ENCODE measurements at regions of chr6 and their contacts with region 1.

Region 1: DNA sequence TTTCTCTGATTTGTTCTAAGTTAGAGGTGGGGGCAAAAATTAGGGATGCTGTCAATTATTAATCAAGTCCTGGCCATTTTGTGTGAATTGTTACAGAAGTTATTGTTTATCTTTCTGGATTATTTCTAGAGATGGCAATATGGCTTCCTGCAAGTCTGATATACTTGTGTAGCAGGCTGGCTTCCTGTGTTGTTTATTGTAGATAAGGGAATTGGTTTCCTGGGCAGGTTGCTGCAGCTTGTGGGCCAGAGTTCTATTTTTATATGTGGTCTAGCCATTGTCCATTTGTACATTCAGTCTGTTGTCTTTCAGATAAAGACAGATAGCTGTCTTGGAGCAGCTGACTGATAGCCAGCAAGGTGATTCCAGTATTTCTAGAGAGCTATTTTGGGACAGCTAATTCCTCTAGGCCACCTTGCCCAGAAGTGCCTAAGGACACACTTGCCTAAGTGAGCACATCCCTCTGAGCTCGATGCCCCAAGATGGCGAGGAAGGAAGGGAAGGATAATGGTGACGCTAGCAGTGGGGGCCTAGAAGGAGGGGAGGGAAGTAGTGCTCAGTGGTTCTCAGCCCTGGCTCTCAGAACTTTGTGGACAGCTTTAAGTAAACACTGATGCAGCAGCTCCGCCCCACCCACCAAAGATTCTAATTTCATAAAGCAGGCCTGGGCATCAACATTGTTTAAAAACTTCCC is 25.5 kb downstream of the DDO start:
- DNase-seq: no peak
- H3K4me3 ChIP-seq: no peak overlapping the region
- H3K27ac ChIP-seq: peak overlapping the region; percentile 22
- H3K4me1 ChIP-seq: peaks cover 57% of the 10 kb centered on the region
- H3K27me3 ChIP-seq: no peaks in the 10 kb centered on the region
- CTCF ChIP-seq: no peak

Region 2: GRCh38 chr6:109382576-109383437 is 1007.0 kb before region 1 on chr6:
- CTCF ChIA-PET with region 1: interaction called, 10 read pairs
- POLR2A ChIA-PET with region 1: no interaction called
- intact Hi-C with region 1: no loop called
- DNase-seq: peak; percentile 97
- H3K4me3 ChIP-seq: peak overlapping the region; percentile 94
- H3K27ac ChIP-seq: peak overlapping the region; percentile 99
- H3K4me1 ChIP-seq: peaks cover 18% of the 10 kb centered on the region
- H3K27me3 ChIP-seq: no peaks in the 10 kb centered on the region
- CTCF ChIP-seq: peak; percentile 73

Region 3: DNA sequence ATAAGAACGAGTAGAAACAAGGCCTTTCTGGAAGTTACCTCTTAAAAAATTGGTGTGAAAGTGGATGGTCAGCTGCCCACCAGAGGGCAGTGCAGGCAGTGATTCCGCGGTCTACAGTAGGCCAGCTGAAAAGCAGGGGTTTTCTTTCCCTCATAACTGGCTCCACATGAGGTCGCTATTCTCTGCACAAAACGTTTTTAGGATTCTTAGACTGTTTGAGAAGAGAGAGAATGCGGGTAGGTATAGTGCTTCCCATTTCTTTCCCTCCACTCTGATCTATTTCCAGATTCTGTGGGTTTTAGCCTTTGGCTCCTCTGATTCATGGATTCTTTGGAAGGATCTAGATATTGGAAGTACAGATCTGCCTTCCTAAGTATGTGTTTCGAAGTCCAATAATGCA is 684.6 kb before region 1 on chr6:
- CTCF ChIA-PET with region 1: interaction called, 6 read pairs
- POLR2A ChIA-PET with region 1: no interaction called
- intact Hi-C with region 1: loop called (anchors 1 kb)
- DNase-seq: peak; percentile 92
- H3K4me3 ChIP-seq: no peak overlapping the region
- H3K27ac ChIP-seq: no peak overlapping the region
- H3K4me1 ChIP-seq: peaks cover 4% of the 10 kb centered on the region
- H3K27me3 ChIP-seq: no peaks in the 10 kb centered on the region
- CTCF ChIP-seq: peak; percentile 99

Region 4: DNA sequence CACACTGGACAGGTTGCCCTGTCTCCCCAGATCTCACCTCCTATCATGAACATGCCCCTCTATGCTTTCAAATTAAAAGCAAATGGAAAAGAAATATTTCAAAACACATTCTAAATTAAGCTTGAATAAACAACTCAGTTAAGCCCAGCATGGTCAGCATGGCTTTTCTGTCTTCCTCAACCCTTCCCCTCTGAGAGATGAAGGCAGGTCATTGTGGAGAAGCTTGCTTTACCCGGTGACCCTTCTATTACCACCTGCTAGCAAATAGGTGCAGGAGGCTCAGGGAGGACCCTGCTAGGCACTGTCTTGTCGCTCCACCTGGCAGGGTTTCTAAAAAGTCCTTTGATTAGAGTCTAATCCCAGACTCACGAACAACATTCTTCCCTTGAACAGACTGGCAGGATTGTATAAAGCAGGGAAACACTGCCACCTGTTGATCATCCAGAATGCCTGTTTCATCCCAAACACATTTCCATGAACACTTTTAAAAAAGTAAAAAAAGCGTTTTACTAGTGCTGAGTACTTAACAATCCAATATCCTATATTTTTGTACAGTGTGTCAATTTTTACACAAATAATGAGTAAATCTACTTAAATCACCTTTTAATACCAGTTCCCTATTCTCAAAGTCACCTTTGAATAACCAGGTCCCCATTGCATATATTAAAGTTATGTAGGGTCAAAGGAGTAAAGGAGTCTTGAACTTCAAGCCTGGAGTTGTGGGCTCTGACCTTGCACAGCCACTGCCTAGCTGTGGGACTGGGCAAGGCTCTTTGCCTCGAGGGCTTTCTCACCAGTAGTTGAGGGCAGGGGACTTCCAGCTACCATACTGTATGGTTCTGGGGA is 336.2 kb before region 1 on chr6:
- CTCF ChIA-PET with region 1: no interaction called
- POLR2A ChIA-PET with region 1: no interaction called
- intact Hi-C with region 1: loop called (anchors 2 kb)
- DNase-seq: peak; percentile 74
- H3K4me3 ChIP-seq: no peak overlapping the region
- H3K27ac ChIP-seq: no peak overlapping the region
- H3K4me1 ChIP-seq: peaks cover 17% of the 10 kb centered on the region
- H3K27me3 ChIP-seq: no peaks in the 10 kb centered on the region
- CTCF ChIP-seq: peak; percentile 85

Region 5: GRCh38 chr6:110296241-110297025 is 93.4 kb before region 1 on chr6:
- CTCF ChIA-PET with region 1: interaction called, 6 read pairs
- POLR2A ChIA-PET with region 1: no interaction called
- intact Hi-C with region 1: loop called (anchors 2 kb)
- DNase-seq: peak; percentile 92
- H3K4me3 ChIP-seq: peak overlapping the region; percentile 35
- H3K27ac ChIP-seq: peak overlapping the region; percentile 98
- H3K4me1 ChIP-seq: peaks cover 63% of the 10 kb centered on the region
- H3K27me3 ChIP-seq: no peaks in the 10 kb centered on the region
- CTCF ChIP-seq: no peak